ENCODE measurements at regions of chr1 and their contacts with region 1.

Region 1: DNA sequence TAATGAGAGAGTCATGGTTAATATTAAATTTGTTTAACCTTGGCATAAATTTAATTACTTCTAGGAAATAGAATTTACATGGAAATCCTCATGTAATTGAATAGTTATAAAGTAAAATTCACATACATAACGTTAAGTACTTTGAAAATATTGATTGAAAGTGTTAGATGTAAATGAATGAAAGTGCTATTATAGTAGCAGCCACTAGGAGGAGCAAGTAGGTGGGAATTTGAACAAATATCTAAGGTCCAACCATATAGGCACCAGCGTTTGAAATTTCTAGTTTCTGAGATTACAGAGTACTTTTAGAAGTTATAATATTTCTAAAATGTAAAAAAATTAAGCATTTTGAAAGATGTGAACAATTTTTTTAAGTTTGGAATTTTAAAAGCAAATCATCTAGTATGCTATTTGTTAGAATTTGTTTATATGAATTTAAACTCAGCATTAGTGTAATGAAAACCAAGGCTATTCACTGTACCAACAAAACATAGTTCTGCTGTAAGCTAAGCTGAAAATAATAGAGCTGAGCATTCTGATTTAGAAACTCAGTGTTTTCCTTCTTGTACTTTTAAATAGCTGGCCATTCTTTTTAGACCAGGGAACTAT is 3.3 kb downstream of the B3GALT2 start:
- DNase-seq: no peak
- ATAC-seq: peak in 1 of 2 donors; percentile 51
- H3K4me3 ChIP-seq: peak overlapping the region; percentile 51
- H3K27ac ChIP-seq: no peak overlapping the region
- H3K4me1 ChIP-seq: no peaks in the 10 kb centered on the region
- H3K27me3 ChIP-seq: no peaks in the 10 kb centered on the region

Region 2: GRCh38 chr1:192998536-192998935 is 184.6 kb before region 1 on chr1:
- intact Hi-C with region 1: no loop called
- DNase-seq: no peak
- ATAC-seq: no peak
- H3K4me3 ChIP-seq: no peak overlapping the region
- H3K27ac ChIP-seq: no peak overlapping the region
- H3K4me1 ChIP-seq: no peaks in the 10 kb centered on the region
- H3K27me3 ChIP-seq: no peaks in the 10 kb centered on the region

Region 3: DNA sequence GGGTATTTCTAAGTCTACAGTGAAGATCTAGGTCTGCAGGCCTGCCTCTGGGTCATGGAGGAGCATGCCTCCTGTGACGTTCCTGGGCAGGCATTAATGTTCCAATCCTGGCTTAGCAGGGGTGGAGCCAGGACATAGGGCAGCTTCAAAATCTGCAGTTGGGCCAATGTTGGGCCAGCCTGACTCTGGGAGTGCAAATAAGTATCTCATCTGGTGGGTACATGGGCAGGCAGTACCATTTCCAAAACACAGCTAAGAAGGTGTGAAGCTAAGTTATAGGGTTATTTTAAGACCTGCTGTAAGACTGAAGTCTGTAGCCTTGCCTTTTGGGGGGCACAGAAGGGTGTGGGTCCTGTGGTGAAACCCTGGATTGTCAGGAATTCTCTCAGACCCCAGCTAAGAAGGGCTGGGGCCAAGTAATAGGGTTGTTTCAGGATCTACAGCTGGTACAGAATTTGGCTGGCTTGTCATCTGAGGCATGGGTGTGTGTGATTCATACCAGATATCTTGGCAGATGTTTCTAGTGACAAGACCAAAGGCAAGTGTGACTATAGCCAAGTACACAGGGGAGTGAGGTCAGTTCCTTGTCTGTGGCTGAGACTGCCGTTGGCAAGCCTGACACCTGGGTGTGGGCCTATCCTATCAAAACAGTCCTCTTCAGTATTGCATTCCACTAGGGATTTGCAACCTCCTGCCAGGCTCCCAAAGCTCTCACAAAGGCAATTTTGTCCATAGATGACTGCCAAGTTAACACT is 472.0 kb after region 1 on chr1:
- intact Hi-C with region 1: loop called in 1 of 4 experiments (anchors 5 kb)
- DNase-seq: peak; percentile 17 to 34 (median 33)
- ATAC-seq: peak; percentile 64 to 85
- H3K4me3 ChIP-seq: no peak overlapping the region
- H3K27ac ChIP-seq: no peak overlapping the region
- H3K4me1 ChIP-seq: no peaks in the 10 kb centered on the region
- H3K27me3 ChIP-seq: no peaks in the 10 kb centered on the region

Region 4: GRCh38 chr1:193674292-193674944 is 491.3 kb after region 1 on chr1:
- intact Hi-C with region 1: no loop called
- DNase-seq: no peak
- ATAC-seq: no peak
- H3K4me3 ChIP-seq: no peak overlapping the region
- H3K27ac ChIP-seq: no peak overlapping the region
- H3K4me1 ChIP-seq: no peaks in the 10 kb centered on the region
- H3K27me3 ChIP-seq: no peaks in the 10 kb centered on the region

Region 5: GRCh38 chr1:193960499-193960898 is 777.4 kb after region 1 on chr1:
- intact Hi-C with region 1: loop called in 1 of 4 experiments (anchors 10 kb)
- DNase-seq: no peak
- ATAC-seq: peak in 1 of 2 donors; percentile 47
- H3K4me3 ChIP-seq: no peak overlapping the region
- H3K27ac ChIP-seq: no peak overlapping the region
- H3K4me1 ChIP-seq: no peaks in the 10 kb centered on the region
- H3K27me3 ChIP-seq: no peaks in the 10 kb centered on the region

Region 6: GRCh38 chr1:194295685-194296084 is 1112.6 kb after region 1 on chr1:
- intact Hi-C with region 1: loop called in 1 of 4 experiments (anchors 10 kb)
- DNase-seq: no peak
- ATAC-seq: peak; percentile 51 to 76
- H3K4me3 ChIP-seq: no peak overlapping the region
- H3K27ac ChIP-seq: no peak overlapping the region
- H3K4me1 ChIP-seq: no peaks in the 10 kb centered on the region
- H3K27me3 ChIP-seq: no peaks in the 10 kb centered on the region

Measured in right cardiac atrium (tissue), 5 donors.